H1 (cell line): ENCODE measurements at regions of chr3 and their contacts with region 1.

Region 1: DNA sequence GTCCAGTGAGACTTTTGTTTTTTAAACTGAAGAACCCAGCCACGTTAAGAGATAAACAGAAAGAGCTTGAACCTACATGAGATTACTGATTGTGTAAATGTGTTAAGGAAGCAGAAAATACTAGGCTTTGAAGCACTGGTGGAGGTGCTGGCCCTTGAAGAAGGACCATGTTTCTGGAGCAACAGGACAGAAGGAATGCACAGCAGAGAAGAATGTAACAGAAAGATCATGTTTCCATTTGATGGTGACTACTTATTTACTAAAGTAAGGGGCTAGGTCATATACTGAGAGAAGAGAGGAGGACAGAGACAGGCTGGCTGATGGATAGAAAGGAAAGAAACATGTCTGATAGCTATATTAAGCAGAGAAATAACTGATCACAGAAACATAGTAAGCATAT is 88.8 kb downstream of the CLASP2 start:
- DNase-seq: no peak
- H3K4me3 ChIP-seq: no peak overlapping the region
- H3K27ac ChIP-seq: no peak overlapping the region
- H3K4me1 ChIP-seq: no peaks in the 10 kb centered on the region
- H3K27me3 ChIP-seq: no peaks in the 10 kb centered on the region
- CTCF ChIP-seq: no peak
- EP300 ChIP-seq: no peak
- POLR2A ChIP-seq: no peak
- RAD21 ChIP-seq: no peak

Region 2: GRCh38 chr3:33773637-33774036 is 144.4 kb after region 1 on chr3:
- CTCF ChIA-PET with region 1: interaction called, 15 read pairs
- POLR2A ChIA-PET with region 1: no interaction called
- DNase-seq: no peak
- H3K4me3 ChIP-seq: no peak overlapping the region
- H3K27ac ChIP-seq: no peak overlapping the region
- H3K4me1 ChIP-seq: no peaks in the 10 kb centered on the region
- H3K27me3 ChIP-seq: no peaks in the 10 kb centered on the region
- CTCF ChIP-seq: no peak
- EP300 ChIP-seq: no peak
- POLR2A ChIP-seq: no peak
- RAD21 ChIP-seq: no peak